Head of caudate nucleus (tissue), 42 donors: ENCODE measurements at regions of chr14 and their contacts with region 1.

Region 1: GRCh38 chr14:21437063-21437901 is 18.6 kb downstream of the CHD8 start:
- DNase-seq: peak; percentile 97 to 100 (median 99)

Region 2: DNA sequence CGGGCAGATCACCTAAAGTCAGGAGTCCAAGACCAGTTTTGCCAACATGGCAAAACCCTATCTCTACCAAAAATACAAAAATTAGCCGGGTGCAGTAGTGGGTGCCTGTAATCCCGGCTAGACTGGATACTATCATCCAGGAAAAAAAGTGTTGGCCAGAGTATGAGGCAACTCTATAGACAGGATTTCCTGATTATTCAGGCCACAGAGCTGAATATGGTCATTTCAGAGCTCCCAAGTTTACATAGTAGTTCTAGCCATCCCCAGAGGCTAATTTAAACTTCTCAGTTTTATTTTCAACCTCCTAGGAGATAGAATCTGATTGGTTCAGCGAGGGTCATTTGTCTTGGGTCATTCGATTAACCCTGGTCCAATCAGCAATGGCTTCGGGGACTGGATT is 150.1 kb before region 1 on chr14:
- intact Hi-C with region 1: no loop called
- DNase-seq: no peak

Region 3: DNA sequence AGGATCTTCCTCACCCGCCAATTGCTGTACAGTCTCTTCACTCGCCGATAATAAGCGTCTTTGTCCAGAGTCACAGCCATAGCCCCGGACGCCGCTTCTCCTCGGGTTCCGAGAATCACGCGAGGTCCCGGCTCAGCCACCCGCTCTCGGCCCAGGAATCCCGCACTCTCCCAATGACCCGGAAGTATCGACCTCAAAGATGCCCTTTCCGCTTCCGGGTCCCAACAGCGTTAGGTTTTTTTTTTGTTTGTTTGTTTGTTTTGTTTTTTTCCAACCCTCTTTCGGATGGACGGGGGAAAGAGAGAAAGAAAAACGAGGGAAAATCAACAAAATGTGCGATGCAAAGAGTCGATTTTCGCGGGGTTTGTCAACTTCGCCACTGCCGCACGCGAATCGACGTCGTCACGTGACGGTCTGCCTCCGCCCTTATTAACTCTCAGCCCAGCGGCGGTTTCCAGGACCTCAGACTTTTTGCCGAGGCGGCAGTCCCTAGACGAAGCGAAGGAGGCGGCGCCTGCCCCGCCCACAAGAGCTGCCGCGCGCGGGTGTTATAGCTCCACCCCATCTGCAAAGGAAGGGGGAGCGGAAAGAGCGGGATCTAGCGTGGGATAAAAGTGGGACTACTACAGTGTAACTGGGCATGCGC is 53.3 kb before region 1 on chr14 and contains the start of gene SUPT16H:
- intact Hi-C with region 1: loop called (anchors 10 kb)
- DNase-seq: peak; percentile 85 to 98 (median 94)

Region 4: DNA sequence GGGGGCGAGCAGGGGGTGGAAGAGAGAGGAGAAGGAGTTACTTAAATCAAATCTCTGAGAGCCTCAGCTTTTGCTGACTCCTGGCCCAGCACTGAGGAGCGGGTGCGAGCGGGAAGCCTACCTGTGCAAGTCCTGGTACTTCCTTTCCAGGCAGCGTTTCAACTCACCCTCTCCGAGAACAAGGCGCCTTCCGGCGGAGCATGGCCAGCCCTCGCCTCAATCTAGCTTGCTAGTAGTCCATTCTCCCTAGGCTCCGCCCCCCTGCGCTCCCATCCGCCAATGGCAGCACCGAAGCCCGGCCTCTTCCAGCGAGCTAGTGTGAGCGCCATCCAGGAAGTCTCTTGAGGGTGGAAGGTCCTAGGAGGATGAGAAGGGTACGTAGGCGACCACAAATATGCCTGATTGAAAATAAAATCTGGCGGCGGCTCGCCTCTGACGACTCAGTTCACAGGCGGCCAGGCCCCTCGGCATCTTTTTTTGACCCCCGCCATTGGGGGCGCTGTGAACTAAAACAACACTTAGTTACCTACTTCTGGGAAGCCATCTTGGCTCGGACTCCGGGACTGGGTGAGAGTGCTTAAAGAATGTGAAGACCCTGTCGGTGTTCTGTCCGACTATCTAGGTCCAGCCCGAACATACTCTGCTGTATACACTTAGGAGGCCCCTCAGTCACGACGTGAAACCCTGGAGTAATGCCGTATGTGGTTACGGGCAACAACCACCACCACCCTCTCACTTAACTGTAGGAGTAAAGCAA is 18.8 kb after region 1 on chr14 and contains the start of gene CHD8:
- intact Hi-C with region 1: loop called (anchors 2 kb)
- DNase-seq: peak; percentile 98 to 100 (median 100)

Region 5: GRCh38 chr14:21525962-21526671 is 88.8 kb after region 1 on chr14 and contains the start of gene SALL2:
- intact Hi-C with region 1: no loop called
- DNase-seq: peak; percentile 66 to 95 (median 87)